B cell (primary cell): ENCODE measurements at regions of chr11 and their contacts with region 1.

Region 1: GRCh38 chr11:119018074-119018938 is at the starts of genes RPS25 and TRAPPC4:
- DNase-seq: peak; percentile 98
- ATAC-seq: peak; percentile 91
- H3K4me3 ChIP-seq: peak within 1 kb of the TSS; percentile 85 to 98 (median 93)
- H3K4me3 Mint-ChIP-seq: peak within 1 kb of the TSS; percentile 100
- H3K27ac ChIP-seq: peak within 1 kb of the TSS; percentile 91 to 92
- H3K27ac Mint-ChIP-seq: peak within 1 kb of the TSS; percentile 100
- H3K4me1 ChIP-seq: peaks cover 27 to 34% of the 10 kb centered on the region in 2 donors
- H3K4me1 Mint-ChIP-seq: peaks cover 46% of the 10 kb centered on the region
- H3K27me3 ChIP-seq: no peaks in the 10 kb centered on the region
- H3K27me3 Mint-ChIP-seq: no peaks in the 10 kb centered on the region
- CTCF ChIP-seq: no peak
- total RNA-seq, gene RPS25: 1,713 and 1,823 TPM in 2 replicates
- total RNA-seq, gene TRAPPC4: 61.5 and 64.5 TPM in 2 replicates

Region 2: GRCh38 chr11:118997627-118998387 is 20.5 kb before region 1 on chr11 and contains the start of gene CENATAC:
- CTCF ChIA-PET with region 1: interaction called, 8 read pairs
- POLR2A ChIA-PET with region 1: interaction called, 14 read pairs
- intact Hi-C with region 1: loop called (anchors 1 kb)
- DNase-seq: peak; percentile 94
- ATAC-seq: peak; percentile 95
- H3K4me3 ChIP-seq: peak within 1 kb of the TSS; percentile 76 to 90 (median 82)
- H3K4me3 Mint-ChIP-seq: peak within 1 kb of the TSS; percentile 99
- H3K27ac ChIP-seq: peak within 1 kb of the TSS; percentile 52 to 77
- H3K27ac Mint-ChIP-seq: peak within 1 kb of the TSS; percentile 94
- H3K4me1 ChIP-seq: peaks cover 17 to 22% of the 10 kb centered on the region in 2 donors
- H3K4me1 Mint-ChIP-seq: peaks cover 35% of the 10 kb centered on the region
- H3K27me3 ChIP-seq: no peaks in the 10 kb centered on the region
- H3K27me3 Mint-ChIP-seq: no peaks in the 10 kb centered on the region
- CTCF ChIP-seq: no peak
- total RNA-seq, gene CENATAC: 122 and 138 TPM in 2 replicates

Region 3: DNA sequence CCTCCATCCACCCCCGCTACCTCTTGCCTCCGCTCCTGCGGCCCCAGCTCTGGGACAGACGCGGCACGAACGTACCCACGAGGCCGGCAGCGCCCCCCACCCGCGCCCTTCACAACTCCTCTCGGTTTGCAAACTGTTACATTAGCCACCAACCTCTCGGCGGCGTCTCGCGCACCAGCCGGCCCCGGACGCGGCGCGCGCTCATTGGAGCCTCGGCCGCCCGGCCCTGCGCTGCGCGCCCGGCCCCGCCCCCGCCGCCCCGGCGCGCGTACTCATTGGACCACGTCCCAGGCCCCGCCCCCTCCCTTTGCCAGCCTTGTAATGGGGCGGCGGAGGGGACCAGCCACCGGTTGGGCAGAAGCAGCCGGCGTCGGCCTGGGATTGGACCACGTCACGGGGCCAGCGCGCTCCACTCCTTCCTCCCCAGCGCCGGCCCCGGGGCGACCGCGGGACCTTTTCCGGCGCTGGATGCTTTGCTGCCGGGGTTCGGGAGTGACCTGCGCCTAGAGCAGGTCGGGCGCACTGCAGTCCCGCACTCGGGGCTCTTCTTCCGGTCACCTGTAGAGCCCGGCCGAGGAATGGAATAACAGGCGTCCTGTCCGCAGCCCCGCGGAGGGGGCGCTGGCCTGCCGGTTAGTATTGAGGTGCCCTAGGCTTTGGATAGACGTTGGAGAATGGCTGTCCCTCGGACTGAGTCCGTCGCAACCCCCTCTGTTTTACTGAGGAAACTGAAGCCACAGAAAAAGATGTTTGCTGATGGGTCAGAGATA is 38.9 kb after region 1 on chr11 and contains the start of gene HYOU1:
- CTCF ChIA-PET with region 1: interaction called, 4 read pairs
- POLR2A ChIA-PET with region 1: interaction called, 3 read pairs
- intact Hi-C with region 1: loop called (anchors 1 kb)
- DNase-seq: peak; percentile 99
- ATAC-seq: peak; percentile 95
- H3K4me3 ChIP-seq: peak within 1 kb of the TSS; percentile 36 to 95 (median 90)
- H3K4me3 Mint-ChIP-seq: peak within 1 kb of the TSS; percentile 97
- H3K27ac ChIP-seq: peak within 1 kb of the TSS; percentile 75 to 93
- H3K27ac Mint-ChIP-seq: peak within 1 kb of the TSS; percentile 93
- H3K4me1 ChIP-seq: peaks cover 18 to 29% of the 10 kb centered on the region in 2 donors
- H3K4me1 Mint-ChIP-seq: peaks cover 36% of the 10 kb centered on the region
- H3K27me3 ChIP-seq: no peaks in the 10 kb centered on the region
- H3K27me3 Mint-ChIP-seq: no peaks in the 10 kb centered on the region
- CTCF ChIP-seq: peak; percentile 6
- total RNA-seq, gene HYOU1: 46.2 and 48.7 TPM in 2 replicates

Region 4: DNA sequence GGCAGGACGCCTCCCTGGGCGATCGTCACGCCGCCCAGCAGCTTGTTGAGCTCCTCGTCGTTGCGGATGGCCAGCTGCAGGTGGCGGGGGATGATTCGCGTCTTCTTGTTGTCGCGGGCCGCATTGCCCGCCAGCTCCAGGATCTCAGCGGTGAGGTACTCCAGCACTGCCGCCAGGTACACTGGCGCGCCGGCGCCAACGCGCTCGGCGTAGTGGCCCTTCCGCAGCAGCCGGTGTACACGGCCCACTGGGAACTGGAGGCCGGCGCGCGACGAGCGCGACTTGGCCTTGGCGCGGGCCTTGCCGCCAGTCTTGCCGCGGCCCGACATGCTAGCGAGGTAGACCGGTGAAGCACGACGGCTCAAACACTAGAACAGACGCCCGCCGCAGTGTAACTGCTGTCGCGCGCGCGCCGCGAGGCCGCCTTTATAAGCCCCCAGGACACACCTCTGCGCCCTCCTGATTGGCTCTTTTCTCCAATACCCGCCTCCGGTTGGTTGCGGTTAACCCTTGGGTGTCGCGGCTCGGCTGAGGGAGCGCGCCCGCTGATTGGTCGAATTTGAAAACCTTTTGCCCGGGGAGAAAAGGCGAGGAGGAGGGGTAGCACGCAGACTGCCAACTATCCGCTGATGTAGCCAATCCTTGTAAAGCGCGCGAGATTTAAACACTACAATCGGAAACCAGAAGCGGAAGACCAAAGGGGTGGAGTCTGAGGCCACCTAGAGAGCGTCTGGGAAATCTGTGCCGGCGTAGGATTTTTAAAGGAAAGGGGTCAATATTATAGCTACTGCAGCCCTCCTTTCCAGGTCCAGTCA is 77.0 kb after region 1 on chr11:
- CTCF ChIA-PET with region 1: interaction called, 3 read pairs
- POLR2A ChIA-PET with region 1: interaction called, 6 read pairs
- intact Hi-C with region 1: loop called (anchors 1 kb)
- DNase-seq: peak; percentile 100
- ATAC-seq: peak; percentile 85
- H3K4me3 ChIP-seq: peak overlapping the region; percentile 42 to 91 (median 85)
- H3K4me3 Mint-ChIP-seq: peak overlapping the region; percentile 96
- H3K27ac ChIP-seq: peak overlapping the region; percentile 69 to 76
- H3K27ac Mint-ChIP-seq: peak overlapping the region; percentile 84
- H3K4me1 ChIP-seq: peaks cover 26 to 43% of the 10 kb centered on the region in 2 donors
- H3K4me1 Mint-ChIP-seq: peaks cover 47% of the 10 kb centered on the region
- H3K27me3 ChIP-seq: no peaks in the 10 kb centered on the region
- H3K27me3 Mint-ChIP-seq: no peaks in the 10 kb centered on the region
- CTCF ChIP-seq: peak; percentile 9